ENCODE measurements at regions of chr13 and their contacts with region 1.

Region 1: GRCh38 chr13:110715395-110716235 is 2.1 kb downstream of the ING1 start:
- DNase-seq: peak; percentile 96
- ATAC-seq: peak; percentile 62
- H3K4me3 ChIP-seq: peak overlapping the region; percentile 99
- H3K27ac ChIP-seq: peak overlapping the region; percentile 48
- H3K4me1 ChIP-seq: peaks cover 8% of the 10 kb centered on the region
- H3K27me3 ChIP-seq: no peaks in the 10 kb centered on the region
- CTCF ChIP-seq: peak; percentile 19; the same call in 1 of the 2 replicates

Region 2: DNA sequence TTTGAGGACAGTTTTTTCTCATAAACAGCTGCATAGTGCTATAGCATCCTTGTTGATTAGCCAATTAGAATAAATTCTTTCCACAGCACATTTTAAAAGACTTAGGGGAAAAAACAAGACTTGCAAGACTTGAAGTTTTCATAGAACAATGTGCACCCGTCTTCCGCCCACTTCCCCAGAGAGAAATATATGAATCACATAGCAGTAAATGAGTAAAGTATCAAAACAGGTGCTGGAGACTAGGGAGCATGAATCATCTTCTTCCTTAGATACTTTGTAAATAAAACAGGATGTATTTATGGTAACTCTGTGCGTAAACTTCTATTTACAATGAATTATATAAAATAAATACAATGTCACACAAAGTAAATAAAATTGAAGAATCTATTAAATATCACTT is 333.4 kb before region 1 on chr13:
- CTCF ChIA-PET with region 1: no interaction called
- POLR2A ChIA-PET with region 1: no interaction called
- intact Hi-C with region 1: no loop called
- DNase-seq: peak; percentile 82
- ATAC-seq: peak; percentile 72
- H3K4me3 ChIP-seq: no peak overlapping the region
- H3K27ac ChIP-seq: peak overlapping the region; percentile 97
- H3K4me1 ChIP-seq: peaks cover 39% of the 10 kb centered on the region
- H3K27me3 ChIP-seq: no peaks in the 10 kb centered on the region
- CTCF ChIP-seq: no peak

Region 3: GRCh38 chr13:110615322-110616102 is 100.1 kb before region 1 on chr13 and contains the start of gene NAXD:
- CTCF ChIA-PET with region 1: no interaction called
- POLR2A ChIA-PET with region 1: interaction called, 4 read pairs
- intact Hi-C with region 1: loop called (anchors 2 kb)
- DNase-seq: peak; percentile 88
- ATAC-seq: peak; percentile 91
- H3K4me3 ChIP-seq: peak within 1 kb of the TSS; percentile 92
- H3K27ac ChIP-seq: peak within 1 kb of the TSS; percentile 69
- H3K4me1 ChIP-seq: peaks cover 30% of the 10 kb centered on the region
- H3K27me3 ChIP-seq: no peaks in the 10 kb centered on the region
- CTCF ChIP-seq: no peak
- total RNA-seq, gene NAXD: 18.7 and 19.0 TPM in 2 replicates

Region 4: DNA sequence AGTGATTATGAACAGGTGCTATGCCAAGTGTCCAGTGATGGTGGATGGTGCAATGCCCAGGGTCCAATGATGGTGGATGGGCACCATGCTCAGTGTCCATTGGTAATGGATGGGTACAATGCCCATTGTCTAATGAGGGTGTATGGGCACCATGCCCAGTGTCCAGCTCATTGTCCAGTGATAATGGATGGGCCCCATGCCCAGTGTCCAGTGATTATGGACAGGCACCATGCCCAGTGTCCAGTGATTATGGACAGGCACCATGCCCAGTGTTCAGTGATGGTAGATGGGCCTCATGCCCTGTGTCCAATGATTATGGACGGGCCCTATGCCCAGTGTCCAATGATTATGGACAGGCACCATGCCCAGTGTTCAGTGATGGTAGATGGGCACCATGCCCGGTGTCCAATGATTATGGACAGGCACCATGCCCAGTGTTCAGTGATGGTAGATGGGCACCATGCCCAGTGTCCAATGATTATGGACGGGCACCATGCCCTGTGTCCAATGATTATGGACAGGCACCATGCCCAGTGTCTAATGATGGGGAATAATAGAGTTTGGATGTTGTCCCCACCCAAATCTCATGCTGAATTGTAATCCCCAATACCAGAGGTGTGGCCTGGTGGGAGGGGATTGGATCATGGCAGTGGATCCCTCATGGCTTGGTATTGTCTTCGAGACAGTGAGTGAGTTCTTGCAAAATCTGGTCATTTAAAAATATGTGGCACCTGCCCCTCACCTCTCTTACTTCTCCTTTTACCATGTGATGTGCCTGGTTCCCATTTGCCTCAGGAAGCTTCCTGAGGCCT is 111.5 kb after region 1 on chr13:
- CTCF ChIA-PET with region 1: no interaction called
- POLR2A ChIA-PET with region 1: no interaction called
- intact Hi-C with region 1: no loop called
- DNase-seq: no peak
- ATAC-seq: no peak
- H3K4me3 ChIP-seq: no peak overlapping the region
- H3K27ac ChIP-seq: no peak overlapping the region
- H3K4me1 ChIP-seq: no peaks in the 10 kb centered on the region
- H3K27me3 ChIP-seq: no peaks in the 10 kb centered on the region
- CTCF ChIP-seq: no peak

Region 5: DNA sequence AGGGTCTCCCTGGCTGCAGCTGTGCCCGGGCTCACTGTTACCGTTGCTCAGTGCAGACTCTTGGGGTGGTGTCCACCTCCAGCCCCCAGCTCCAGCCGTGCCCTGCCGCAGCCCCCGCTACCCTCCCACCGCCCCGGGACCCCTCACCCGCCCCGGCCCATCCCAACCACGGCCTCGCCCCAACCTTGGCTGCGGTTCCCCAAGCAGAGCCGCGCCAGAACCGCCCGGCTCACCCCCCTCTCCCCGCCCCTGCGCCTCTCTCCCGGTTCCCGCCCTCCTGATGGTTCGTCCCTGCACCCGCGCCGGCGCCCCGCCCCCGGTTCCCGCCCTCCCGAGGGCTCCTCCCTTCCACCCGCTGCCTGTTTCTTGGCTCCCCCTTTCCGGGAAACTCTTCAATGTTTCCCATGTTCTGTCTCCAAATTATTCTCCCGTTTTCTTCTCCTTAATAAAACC is 158.9 kb after region 1 on chr13:
- CTCF ChIA-PET with region 1: no interaction called
- POLR2A ChIA-PET with region 1: no interaction called
- intact Hi-C with region 1: loop called (anchors 1 kb)
- DNase-seq: peak; percentile 70
- ATAC-seq: peak; percentile 61
- H3K4me3 ChIP-seq: peak overlapping the region; percentile 61
- H3K27ac ChIP-seq: no peak overlapping the region
- H3K4me1 ChIP-seq: peaks cover 24% of the 10 kb centered on the region
- H3K27me3 ChIP-seq: no peaks in the 10 kb centered on the region
- CTCF ChIP-seq: no peak

Measured in PC-3 (cell line).